ENCODE measurements at regions of chr2 and their contacts with region 1.

Region 1: DNA sequence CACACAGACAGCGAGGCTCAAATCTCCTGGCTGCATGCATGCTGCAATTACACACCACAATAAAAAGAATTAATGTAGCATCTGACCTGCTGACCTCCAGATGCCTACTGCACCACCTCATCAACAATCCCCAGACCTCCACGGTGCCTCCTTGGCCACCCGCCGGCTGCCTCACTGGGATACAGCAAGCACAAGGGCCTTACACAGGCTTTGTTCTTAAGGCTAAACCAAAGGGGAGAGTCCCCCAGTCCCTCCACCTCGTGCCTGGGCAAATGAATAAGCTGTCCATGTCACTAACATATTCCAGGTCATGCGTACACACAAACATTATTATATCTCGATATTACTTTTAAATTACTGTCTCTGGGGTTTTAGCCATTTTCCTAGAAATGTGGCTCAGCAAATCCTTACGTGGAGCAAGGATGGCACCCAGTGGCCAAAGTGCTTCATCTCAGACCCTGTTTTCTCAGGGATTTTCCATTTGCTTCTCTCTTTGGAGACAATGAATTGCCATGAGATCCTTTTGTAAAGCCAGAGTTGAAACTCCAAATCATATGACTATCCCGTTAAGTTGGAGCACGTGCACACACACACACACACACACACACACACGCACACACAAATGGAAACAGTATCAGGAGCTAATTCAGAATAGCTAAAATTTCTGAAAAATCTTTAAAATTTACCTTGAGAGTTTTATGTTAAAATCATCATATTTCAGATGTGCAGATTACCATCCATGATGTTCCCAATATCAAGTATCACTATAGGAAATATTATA is 313.8 kb downstream of the PDE11A start:
- DNase-seq: peak in 1 of 2 experiments; percentile 60
- H3K4me3 ChIP-seq: no peak overlapping the region
- H3K4me3 Mint-ChIP-seq: no peak overlapping the region
- H3K27ac Mint-ChIP-seq: no peak overlapping the region
- H3K4me1 ChIP-seq: peaks cover 12% of the 10 kb centered on the region
- H3K4me1 Mint-ChIP-seq: peaks cover 9% of the 10 kb centered on the region
- H3K27me3 ChIP-seq: no peaks in the 10 kb centered on the region; the same call in 1 of the 2 replicates
- H3K27me3 Mint-ChIP-seq: peaks cover 12% of the 10 kb centered on the region
- CTCF ChIP-seq: peak; percentile 54 to 65

Region 2: GRCh38 chr2:177419274-177419673 is 339.5 kb before region 1 on chr2:
- CTCF ChIA-PET with region 1: no interaction called
- POLR2A ChIA-PET with region 1: no interaction called
- intact Hi-C with region 1: loop called (anchors 5 kb)
- DNase-seq: no peak
- H3K4me3 ChIP-seq: no peak overlapping the region
- H3K4me3 Mint-ChIP-seq: no peak overlapping the region
- H3K27ac Mint-ChIP-seq: peak overlapping the region; percentile 53
- H3K4me1 ChIP-seq: peaks cover 34% of the 10 kb centered on the region
- H3K4me1 Mint-ChIP-seq: peaks cover 29% of the 10 kb centered on the region
- H3K27me3 ChIP-seq: no peaks in the 10 kb centered on the region
- H3K27me3 Mint-ChIP-seq: no peaks in the 10 kb centered on the region
- CTCF ChIP-seq: no peak

Region 3: GRCh38 chr2:177489719-177490301 is 269.0 kb before region 1 on chr2:
- CTCF ChIA-PET with region 1: interaction called, 4 read pairs
- POLR2A ChIA-PET with region 1: no interaction called
- intact Hi-C with region 1: loop called (anchors 1 kb)
- DNase-seq: peak in 1 of 2 experiments; percentile 40
- H3K4me3 ChIP-seq: no peak overlapping the region
- H3K4me3 Mint-ChIP-seq: no peak overlapping the region
- H3K27ac Mint-ChIP-seq: no peak overlapping the region
- H3K4me1 ChIP-seq: 0 out of 2 replicates have a peak, but pooled peaks cover 3% of the 10 kb centered on the region
- H3K4me1 Mint-ChIP-seq: no peaks in the 10 kb centered on the region
- H3K27me3 ChIP-seq: no peaks in the 10 kb centered on the region
- H3K27me3 Mint-ChIP-seq: no peaks in the 10 kb centered on the region
- CTCF ChIP-seq: peak; percentile 60 to 69

Region 4: GRCh38 chr2:177983183-177983788 is 224.5 kb after region 1 on chr2:
- CTCF ChIA-PET with region 1: no interaction called
- POLR2A ChIA-PET with region 1: no interaction called
- intact Hi-C with region 1: no loop called
- DNase-seq: peak; percentile 35 to 48
- H3K4me3 ChIP-seq: no peak overlapping the region
- H3K4me3 Mint-ChIP-seq: no peak overlapping the region
- H3K27ac Mint-ChIP-seq: no peak overlapping the region
- H3K4me1 ChIP-seq: no peaks in the 10 kb centered on the region
- H3K4me1 Mint-ChIP-seq: no peaks in the 10 kb centered on the region
- H3K27me3 ChIP-seq: no peaks in the 10 kb centered on the region; the same call in 1 of the 2 replicates
- H3K27me3 Mint-ChIP-seq: peaks cover 6% of the 10 kb centered on the region
- CTCF ChIP-seq: peak; percentile 79 to 86

Region 5: GRCh38 chr2:178025551-178026185 is 266.9 kb after region 1 on chr2:
- CTCF ChIA-PET with region 1: no interaction called
- POLR2A ChIA-PET with region 1: no interaction called
- intact Hi-C with region 1: no loop called
- DNase-seq: no peak
- H3K4me3 ChIP-seq: no peak overlapping the region
- H3K4me3 Mint-ChIP-seq: no peak overlapping the region
- H3K27ac Mint-ChIP-seq: no peak overlapping the region
- H3K4me1 ChIP-seq: no peaks in the 10 kb centered on the region
- H3K4me1 Mint-ChIP-seq: no peaks in the 10 kb centered on the region
- H3K27me3 ChIP-seq: no peaks in the 10 kb centered on the region
- H3K27me3 Mint-ChIP-seq: peaks cover 6% of the 10 kb centered on the region
- CTCF ChIP-seq: no peak